ENCODE measurements at regions of chr1 and their contacts with region 1.

Region 1: DNA sequence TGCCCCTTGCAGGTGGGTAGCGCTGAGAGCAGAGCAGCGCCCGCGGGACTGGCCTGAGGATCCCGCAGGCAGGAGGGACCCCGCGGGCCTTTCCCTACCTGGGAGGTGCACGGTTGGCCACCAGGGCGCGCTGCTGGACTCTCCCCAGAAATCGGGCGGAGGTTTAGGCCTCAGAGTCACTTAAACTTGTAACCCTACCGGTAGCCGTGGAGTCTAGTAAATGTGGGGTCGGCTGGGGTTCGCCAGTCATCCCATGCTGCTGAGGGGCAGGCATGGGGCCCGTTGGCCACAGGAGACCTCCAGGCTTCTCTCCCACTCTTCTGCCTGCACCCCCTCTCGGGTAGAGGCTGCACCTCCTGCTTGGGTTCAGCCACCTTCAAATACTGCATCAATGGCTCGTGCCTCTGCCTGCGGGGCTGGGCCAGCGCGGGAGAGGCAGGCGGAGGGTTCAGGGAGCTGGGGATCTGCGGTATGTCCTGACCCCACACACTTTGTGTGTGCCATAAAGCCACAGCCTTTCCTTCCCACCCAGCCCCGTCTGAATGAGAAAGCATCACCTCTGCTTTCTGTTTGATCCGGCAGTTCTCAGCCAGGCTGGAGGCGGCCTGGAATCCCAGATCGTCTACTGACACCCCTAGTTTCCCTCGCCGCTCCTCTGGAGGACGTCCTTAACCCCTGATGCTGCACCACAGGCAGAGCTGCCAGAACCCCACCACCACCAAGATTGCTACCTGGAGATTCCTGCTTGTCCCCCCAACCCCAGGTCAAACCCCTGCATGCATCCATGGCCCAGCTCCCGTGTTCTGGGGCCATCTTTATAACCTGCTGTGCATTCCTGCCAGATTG is 12.3 kb upstream of the GSTM4 start:
- DNase-seq: peak; percentile 88
- H3K4me3 Mint-ChIP-seq: no peak overlapping the region
- H3K27ac Mint-ChIP-seq: no peak overlapping the region
- H3K4me1 Mint-ChIP-seq: peaks cover 18% of the 10 kb centered on the region
- H3K27me3 Mint-ChIP-seq: peaks cover 7% of the 10 kb centered on the region

Region 2: GRCh38 chr1:109539676-109540075 is 103.9 kb before region 1 on chr1 and contains the start of gene GPR61:
- CTCF ChIA-PET with region 1: interaction called, 101 read pairs
- POLR2A ChIA-PET with region 1: no interaction called
- DNase-seq: no peak
- H3K4me3 Mint-ChIP-seq: no peak within 1 kb of the TSS
- H3K27ac Mint-ChIP-seq: no peak within 1 kb of the TSS
- H3K4me1 Mint-ChIP-seq: no peaks in the 10 kb centered on the region
- H3K27me3 Mint-ChIP-seq: peaks cover 1% of the 10 kb centered on the region
- total RNA-seq, gene GPR61: 0.53 TPM in 1 of 2 experiments, not detected in the other

Region 3: DNA sequence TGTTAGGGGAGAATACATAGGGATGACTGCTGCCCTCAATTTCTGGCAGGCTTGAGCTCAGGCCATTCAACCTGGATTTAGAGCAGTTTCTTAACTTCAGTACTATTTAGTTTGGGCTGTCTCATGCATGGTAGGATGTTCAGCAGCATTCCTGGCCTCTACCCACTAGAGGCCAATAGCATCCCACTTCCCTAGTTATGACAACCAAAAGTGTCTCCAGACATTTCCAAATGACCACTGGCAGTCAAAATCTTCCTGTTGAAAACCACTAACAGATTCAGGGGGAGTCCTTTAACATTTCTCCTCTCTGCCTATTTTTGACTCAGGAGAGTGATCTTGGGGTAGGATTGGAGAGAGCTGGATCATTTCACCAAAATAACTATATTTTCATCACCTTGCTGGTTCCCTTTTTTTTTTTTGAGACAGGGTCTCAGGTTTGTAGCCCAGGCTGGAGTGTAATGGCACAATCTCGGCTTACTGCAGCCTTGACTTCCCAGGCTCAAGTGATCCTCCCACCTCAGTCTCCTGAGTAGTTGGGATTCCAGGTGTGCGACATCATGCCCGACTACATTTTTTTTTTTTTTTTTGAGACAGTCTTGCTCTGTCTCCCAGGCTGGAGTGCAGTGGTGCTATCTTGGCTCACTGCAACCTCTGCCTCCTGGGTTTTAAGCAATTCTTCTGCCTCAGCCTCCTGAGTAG is 32.9 kb before region 1 on chr1:
- CTCF ChIA-PET with region 1: interaction called, 15 read pairs
- POLR2A ChIA-PET with region 1: interaction called, 3 read pairs
- DNase-seq: no peak
- H3K4me3 Mint-ChIP-seq: no peak overlapping the region
- H3K27ac Mint-ChIP-seq: no peak overlapping the region
- H3K4me1 Mint-ChIP-seq: peaks cover 2% of the 10 kb centered on the region
- H3K27me3 Mint-ChIP-seq: no peaks in the 10 kb centered on the region

Region 4: DNA sequence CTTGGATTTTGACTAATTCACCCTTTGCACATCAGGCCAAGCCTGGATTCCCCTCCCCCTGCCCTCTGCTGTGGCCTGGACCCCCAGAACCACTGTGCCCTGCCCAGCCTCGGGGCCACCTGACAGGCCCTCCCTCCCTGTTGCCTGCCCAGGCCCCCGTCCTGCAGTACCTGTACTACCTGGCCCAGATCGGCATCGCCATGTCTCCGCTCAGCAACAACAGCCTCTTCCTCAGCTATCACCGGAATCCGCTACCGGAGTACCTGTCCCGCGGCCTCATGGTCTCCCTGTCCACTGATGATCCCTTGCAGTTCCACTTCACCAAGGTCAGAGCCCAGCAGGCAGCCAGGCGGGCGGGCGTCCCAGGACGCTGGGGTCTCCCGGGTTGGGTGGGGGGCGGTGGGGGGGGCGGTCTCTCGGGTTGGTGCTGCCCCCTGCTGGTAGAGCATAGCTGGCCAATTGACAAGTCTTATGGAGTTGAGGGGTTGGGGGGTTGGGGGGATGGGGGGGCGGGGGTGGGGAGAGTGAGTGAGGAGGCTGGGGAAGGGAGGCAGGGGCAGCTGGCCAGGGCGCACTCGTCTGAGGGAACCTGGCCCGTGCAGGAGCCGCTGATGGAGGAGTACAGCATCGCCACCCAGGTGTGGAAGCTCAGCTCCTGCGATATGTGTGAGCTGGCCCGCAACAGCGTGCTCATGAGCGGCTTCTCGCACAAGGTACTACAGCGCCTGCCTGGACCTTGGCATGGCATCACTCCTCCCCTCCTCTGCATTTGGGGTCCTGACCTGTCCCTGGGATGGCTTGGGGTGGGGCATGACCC is 13.3 kb before region 1 on chr1:
- CTCF ChIA-PET with region 1: interaction called, 33 read pairs
- POLR2A ChIA-PET with region 1: no interaction called
- DNase-seq: no peak
- H3K4me3 Mint-ChIP-seq: no peak overlapping the region
- H3K27ac Mint-ChIP-seq: no peak overlapping the region
- H3K4me1 Mint-ChIP-seq: peaks cover 17% of the 10 kb centered on the region
- H3K27me3 Mint-ChIP-seq: no peaks in the 10 kb centered on the region

Region 5: GRCh38 chr1:109773146-109773899 is 129.7 kb after region 1 on chr1:
- CTCF ChIA-PET with region 1: interaction called, 116 read pairs
- POLR2A ChIA-PET with region 1: interaction called, 10 read pairs
- DNase-seq: peak; percentile 79
- H3K4me3 Mint-ChIP-seq: no peak overlapping the region
- H3K27ac Mint-ChIP-seq: no peak overlapping the region
- H3K4me1 Mint-ChIP-seq: peaks cover 17% of the 10 kb centered on the region
- H3K27me3 Mint-ChIP-seq: peaks cover 7% of the 10 kb centered on the region

Measured in activated CD4-positive, alpha-beta memory T cell treated with anti-CD3 and anti-CD28 coated beads, Interleukin-2, amount 10 ng/mL, durations not matched to agents 7 days and 5 days (primary cell).